Ovary (tissue), 10 donors: ENCODE measurements at regions of chr9 and their contacts with region 1.

Region 1: GRCh38 chr9:5586391-5586802 is 42.5 kb upstream of the RIC1 start:
- DNase-seq: no peak
- H3K4me3 ChIP-seq: no peak overlapping the region
- H3K27ac ChIP-seq: no peak overlapping the region
- H3K4me1 ChIP-seq: no peaks in the 10 kb centered on the region
- H3K27me3 ChIP-seq: no peaks in the 10 kb centered on the region
- CTCF ChIP-seq: no peak
- EP300 ChIP-seq: no peak
- POLR2A ChIP-seq: no peak

Region 2: GRCh38 chr9:5114073-5114619 is 472.3 kb before region 1 on chr9:
- intact Hi-C with region 1: no loop called
- DNase-seq: no peak
- H3K4me3 ChIP-seq: no peak overlapping the region
- H3K27ac ChIP-seq: no peak overlapping the region
- H3K4me1 ChIP-seq: no peaks in the 10 kb centered on the region
- H3K27me3 ChIP-seq: no peaks in the 10 kb centered on the region
- CTCF ChIP-seq: no peak
- EP300 ChIP-seq: no peak
- POLR2A ChIP-seq: no peak

Region 3: DNA sequence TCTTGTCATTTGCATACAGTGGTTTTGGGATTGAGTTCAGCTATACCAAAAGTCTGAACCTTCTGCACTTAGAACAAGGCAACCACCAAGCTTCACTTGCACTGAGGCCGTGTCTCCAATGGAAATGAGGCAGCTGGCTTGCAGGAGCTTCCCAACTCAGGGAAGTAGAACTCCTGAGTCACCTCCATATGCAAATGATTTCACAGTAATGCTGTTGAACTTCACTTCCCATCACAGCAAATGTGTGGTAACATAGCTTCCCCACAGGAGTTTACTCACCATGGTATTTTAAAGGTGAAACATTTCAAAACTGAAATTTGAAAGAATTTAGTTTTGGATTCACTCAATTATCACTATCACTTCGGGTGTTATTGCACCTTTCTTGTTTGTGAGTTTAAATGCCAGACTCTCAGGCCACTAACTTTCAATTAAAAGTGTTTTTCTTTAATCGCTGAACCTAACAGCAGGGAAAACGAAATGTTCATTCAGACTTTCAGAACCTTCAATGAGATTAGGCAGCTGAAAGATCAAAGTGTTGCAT is 127.0 kb before region 1 on chr9:
- intact Hi-C with region 1: loop called in 2 of 4 experiments (anchors 5 to 10 kb)
- DNase-seq: no peak
- H3K4me3 ChIP-seq: no peak overlapping the region
- H3K27ac ChIP-seq: no peak overlapping the region
- H3K4me1 ChIP-seq: no peaks in the 10 kb centered on the region
- H3K27me3 ChIP-seq: no peaks in the 10 kb centered on the region
- CTCF ChIP-seq: no peak
- EP300 ChIP-seq: no peak
- POLR2A ChIP-seq: no peak